ENCODE measurements at regions of chr2 and their contacts with region 1.

Region 1: GRCh38 chr2:45494269-45494977 is 116.6 kb downstream of the SRBD1 start:
- DNase-seq: peak; percentile 79
- H3K4me3 ChIP-seq: no peak overlapping the region
- CTCF ChIP-seq: peak; percentile 61

Region 2: DNA sequence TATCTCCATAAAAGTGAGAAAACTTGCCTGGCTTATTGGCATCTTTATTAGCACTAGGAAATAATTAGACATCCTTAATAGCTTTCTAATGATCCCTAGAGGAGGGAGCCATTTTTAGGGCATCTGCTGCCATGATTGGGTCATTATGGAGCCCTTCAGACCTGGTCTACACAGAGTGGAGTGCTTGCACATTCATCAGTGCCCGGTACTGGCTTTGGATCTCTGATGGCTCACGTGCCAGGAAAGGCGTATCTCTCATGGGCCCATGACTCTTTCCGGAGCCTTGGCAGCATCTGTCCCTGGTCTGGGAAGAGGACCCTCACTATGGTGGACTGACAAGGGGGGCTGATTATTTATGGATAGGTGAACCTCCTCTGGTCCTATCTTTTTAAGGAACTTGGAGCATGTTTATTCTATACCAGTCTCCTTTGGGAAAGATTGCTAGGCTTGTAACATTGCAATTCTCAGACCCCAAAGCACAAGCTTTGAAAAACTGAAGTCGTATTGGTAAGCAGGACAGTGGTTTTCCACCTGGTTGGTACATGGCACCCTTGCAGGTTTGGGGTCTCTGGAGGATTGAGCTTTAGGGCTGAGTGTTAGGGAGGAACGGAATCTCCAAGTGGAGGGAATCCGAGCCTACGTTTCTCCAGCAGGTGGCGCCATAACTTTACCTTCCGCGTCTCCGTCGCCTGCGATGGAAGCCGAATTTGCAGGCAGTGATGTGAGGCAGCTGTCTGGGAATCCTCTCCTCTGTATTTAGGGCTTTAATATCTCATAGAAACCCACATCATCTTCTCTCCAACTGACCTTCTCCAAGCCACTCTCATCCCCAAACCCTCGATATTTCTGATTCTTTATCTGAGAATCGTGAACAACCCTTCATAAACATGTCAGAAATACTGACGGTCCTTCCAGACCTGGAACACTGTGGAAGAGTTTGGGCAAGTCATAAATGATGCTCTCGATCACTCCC is 513.0 kb before region 1 on chr2:
- in situ Hi-C with region 1: loop called (anchors 25 kb)
- DNase-seq: peak; percentile 76
- H3K4me3 ChIP-seq: no peak overlapping the region
- CTCF ChIP-seq: peak; percentile 81